Keratinocyte (primary cell): ENCODE measurements at regions of chr9 and their contacts with region 1.

Region 1: GRCh38 chr9:93682232-93682968 is 106.0 kb downstream of the PHF2 start:
- DNase-seq: peak; percentile 28
- H3K4me3 ChIP-seq: no peak overlapping the region
- H3K27ac ChIP-seq: no peak overlapping the region
- H3K4me1 ChIP-seq: no peaks in the 10 kb centered on the region
- H3K27me3 ChIP-seq: peaks cover 3% of the 10 kb centered on the region
- CTCF ChIP-seq: peak; percentile 75 to 83 (median 81)

Region 2: GRCh38 chr9:93468763-93469456 is 213.5 kb before region 1 on chr9:
- dilution Hi-C with region 1: no loop called
- DNase-seq: no peak
- H3K4me3 ChIP-seq: no peak overlapping the region
- H3K27ac ChIP-seq: peak overlapping the region; percentile 11
- H3K4me1 ChIP-seq: peaks cover 33% of the 10 kb centered on the region
- H3K27me3 ChIP-seq: no peaks in the 10 kb centered on the region
- CTCF ChIP-seq: no peak

Region 3: DNA sequence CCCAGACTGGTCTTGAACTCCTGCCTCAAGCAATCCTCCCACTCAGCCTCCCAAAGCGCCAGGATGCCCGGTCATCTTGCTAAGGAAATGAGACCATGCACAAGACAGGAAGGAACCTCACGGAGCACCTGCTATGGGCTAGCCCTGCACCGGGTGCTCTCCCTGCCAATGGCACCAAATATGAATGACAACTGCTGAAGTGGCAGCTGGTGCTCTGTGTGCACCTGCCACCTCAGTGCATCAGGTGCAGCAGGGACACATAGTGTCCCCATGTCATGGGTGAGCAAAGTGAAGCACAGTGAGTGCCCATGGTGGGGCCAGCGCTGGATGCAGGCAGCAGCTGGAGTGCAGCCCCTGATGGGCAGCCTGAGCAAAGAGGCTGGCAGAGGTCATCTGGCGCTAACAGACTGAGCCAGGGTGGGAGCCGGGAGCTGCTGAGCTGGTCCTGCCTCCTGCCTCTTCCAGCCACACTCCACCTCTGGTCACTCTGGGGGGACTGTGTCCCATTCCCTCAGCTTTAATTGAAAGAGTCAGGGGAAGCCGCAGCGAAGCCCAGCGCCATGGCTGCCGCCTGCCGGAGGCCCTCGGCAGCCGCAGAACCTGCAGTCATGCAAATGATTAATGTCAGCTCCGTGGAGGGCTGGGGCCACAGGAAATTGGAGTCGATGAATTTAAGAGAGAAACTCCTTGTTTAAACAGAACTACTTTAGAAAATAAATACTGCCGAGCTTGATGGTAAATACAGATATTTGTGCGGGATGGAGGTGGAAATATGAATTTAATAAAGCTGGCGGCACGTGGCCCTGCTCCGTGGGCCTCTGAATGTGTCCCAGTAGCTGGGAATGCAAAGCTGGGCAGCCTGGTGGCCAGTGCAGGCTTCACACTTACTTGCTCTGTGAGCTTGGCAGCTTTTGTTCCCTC is 226.5 kb after region 1 on chr9:
- dilution Hi-C with region 1: no loop called
- DNase-seq: no peak
- H3K4me3 ChIP-seq: no peak overlapping the region
- H3K27ac ChIP-seq: no peak overlapping the region
- H3K4me1 ChIP-seq: no peaks in the 10 kb centered on the region
- H3K27me3 ChIP-seq: peaks cover 27% of the 10 kb centered on the region
- CTCF ChIP-seq: no peak

Region 4: GRCh38 chr9:93996863-93997262 is 314.5 kb after region 1 on chr9:
- dilution Hi-C with region 1: loop called (anchors 25 kb)
- DNase-seq: no peak
- H3K4me3 ChIP-seq: no peak overlapping the region
- H3K27ac ChIP-seq: no peak overlapping the region
- H3K4me1 ChIP-seq: no peaks in the 10 kb centered on the region
- H3K27me3 ChIP-seq: no peaks in the 10 kb centered on the region
- CTCF ChIP-seq: peak in 2 of 3 experiments; percentile 22 to 27